MCF 10A (cell line): ENCODE measurements at regions of chr17 and their contacts with region 1.

Region 1: DNA sequence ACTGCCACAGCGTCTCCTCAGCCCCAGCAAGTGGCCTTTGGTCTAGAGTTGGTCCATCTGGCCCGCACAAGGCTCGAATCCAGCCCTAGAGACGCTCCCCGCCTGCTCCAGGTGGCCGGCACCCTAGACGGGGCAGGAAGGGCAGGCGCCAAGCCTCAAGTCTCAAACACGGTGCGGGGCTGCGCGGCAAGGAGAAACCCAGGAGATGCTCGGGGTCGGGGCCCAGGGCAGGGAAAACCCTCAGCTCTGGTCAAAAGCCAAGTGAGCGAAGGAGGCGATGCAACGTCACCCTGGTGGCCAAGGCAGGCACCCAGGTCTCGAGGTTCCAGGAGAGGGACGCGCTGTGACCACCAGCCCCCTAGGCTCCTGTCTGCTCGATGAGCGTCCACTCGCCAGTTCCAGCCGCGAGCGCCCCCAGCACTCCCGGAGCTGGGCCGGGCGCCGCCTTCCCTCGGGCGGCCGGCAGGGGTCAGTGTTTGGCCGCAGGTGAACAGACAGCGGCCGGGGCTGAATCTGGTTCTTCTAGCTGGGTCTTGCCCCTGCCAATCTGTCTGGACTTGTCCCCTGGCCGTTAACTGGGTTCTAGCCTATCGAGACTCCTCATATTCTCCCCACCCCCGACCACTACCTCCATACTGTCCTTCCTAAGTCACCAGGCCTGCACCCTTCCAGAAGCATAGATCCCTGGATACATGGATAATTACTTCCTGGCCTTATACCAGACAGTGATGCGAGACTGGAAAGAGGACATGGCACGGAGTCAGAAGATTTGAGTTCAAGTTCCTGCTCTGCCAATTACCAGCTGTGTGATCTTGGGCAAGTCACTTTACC is 44.0 kb downstream of the PRAC1 start:
- DNase-seq: peak; percentile 72
- H3K4me3 Mint-ChIP-seq: no peak overlapping the region
- H3K27ac Mint-ChIP-seq: no peak overlapping the region
- H3K4me1 Mint-ChIP-seq: peaks cover 4% of the 10 kb centered on the region
- H3K27me3 Mint-ChIP-seq: peaks cover 19% of the 10 kb centered on the region
- CTCF ChIP-seq: peak; percentile 96

Region 2: GRCh38 chr17:48704361-48705248 is 26.2 kb after region 1 on chr17:
- CTCF ChIA-PET with region 1: interaction called, 11 read pairs
- POLR2A ChIA-PET with region 1: no interaction called
- intact Hi-C with region 1: no loop called
- DNase-seq: no peak
- H3K4me3 Mint-ChIP-seq: no peak overlapping the region
- H3K27ac Mint-ChIP-seq: no peak overlapping the region
- H3K4me1 Mint-ChIP-seq: no peaks in the 10 kb centered on the region
- H3K27me3 Mint-ChIP-seq: peaks cover 100% of the 10 kb centered on the region
- CTCF ChIP-seq: no peak

Region 3: GRCh38 chr17:48718761-48719641 is 40.6 kb after region 1 on chr17:
- CTCF ChIA-PET with region 1: interaction called, 26 read pairs
- POLR2A ChIA-PET with region 1: interaction called, 4 read pairs
- intact Hi-C with region 1: no loop called
- DNase-seq: no peak
- H3K4me3 Mint-ChIP-seq: no peak overlapping the region
- H3K27ac Mint-ChIP-seq: no peak overlapping the region
- H3K4me1 Mint-ChIP-seq: no peaks in the 10 kb centered on the region
- H3K27me3 Mint-ChIP-seq: peaks cover 28% of the 10 kb centered on the region
- CTCF ChIP-seq: no peak

Region 4: DNA sequence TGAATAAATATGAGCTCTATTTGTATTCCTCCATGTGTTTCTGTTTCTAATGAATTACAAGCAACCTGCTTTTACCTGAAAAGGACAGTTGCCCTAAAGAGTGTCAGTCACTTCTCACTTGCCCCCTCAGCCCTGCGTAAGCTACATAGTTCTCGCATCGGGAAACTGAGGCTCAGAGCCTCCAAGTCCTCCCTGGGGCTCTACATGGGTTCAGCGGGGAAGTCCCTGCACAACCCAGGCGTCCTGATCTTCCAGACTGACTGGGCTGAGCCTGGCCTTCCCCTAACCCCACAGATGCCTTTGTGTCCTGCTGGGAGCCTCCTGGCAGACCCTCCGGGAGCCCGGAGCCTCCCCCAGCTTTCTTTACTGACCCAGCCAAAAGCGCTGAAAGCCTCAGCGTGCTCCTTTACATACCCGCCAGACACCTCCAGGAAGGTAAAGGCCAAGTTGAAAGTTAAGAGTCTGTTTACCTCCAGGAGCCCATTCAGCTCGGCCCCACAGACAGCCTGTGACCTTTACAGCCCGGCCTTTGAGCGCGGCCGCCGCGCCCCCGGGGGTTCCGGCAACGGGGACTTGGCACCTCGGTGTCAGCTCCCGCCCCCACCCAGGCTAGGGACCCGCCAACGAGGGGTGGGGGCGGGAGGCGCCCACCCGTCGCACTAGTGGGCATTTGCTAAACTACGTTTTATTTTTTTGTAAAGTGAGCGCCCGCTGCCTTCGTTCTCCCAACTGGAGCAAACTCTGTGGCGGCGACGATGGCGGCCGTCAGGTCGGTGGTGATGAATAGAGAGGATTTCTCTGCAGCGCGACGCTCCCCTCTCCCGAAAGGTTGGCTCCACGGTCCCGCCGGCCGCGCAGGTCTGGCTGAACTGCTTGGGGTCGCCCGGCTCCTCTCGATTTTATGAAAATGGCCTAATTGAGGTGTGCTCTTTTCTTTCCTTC is 54.6 kb after region 1 on chr17:
- CTCF ChIA-PET with region 1: no interaction called
- POLR2A ChIA-PET with region 1: no interaction called
- intact Hi-C with region 1: no loop called
- DNase-seq: no peak
- H3K4me3 Mint-ChIP-seq: no peak overlapping the region
- H3K27ac Mint-ChIP-seq: no peak overlapping the region
- H3K4me1 Mint-ChIP-seq: peaks cover 6% of the 10 kb centered on the region
- H3K27me3 Mint-ChIP-seq: peaks cover 100% of the 10 kb centered on the region
- CTCF ChIP-seq: no peak

Region 5: DNA sequence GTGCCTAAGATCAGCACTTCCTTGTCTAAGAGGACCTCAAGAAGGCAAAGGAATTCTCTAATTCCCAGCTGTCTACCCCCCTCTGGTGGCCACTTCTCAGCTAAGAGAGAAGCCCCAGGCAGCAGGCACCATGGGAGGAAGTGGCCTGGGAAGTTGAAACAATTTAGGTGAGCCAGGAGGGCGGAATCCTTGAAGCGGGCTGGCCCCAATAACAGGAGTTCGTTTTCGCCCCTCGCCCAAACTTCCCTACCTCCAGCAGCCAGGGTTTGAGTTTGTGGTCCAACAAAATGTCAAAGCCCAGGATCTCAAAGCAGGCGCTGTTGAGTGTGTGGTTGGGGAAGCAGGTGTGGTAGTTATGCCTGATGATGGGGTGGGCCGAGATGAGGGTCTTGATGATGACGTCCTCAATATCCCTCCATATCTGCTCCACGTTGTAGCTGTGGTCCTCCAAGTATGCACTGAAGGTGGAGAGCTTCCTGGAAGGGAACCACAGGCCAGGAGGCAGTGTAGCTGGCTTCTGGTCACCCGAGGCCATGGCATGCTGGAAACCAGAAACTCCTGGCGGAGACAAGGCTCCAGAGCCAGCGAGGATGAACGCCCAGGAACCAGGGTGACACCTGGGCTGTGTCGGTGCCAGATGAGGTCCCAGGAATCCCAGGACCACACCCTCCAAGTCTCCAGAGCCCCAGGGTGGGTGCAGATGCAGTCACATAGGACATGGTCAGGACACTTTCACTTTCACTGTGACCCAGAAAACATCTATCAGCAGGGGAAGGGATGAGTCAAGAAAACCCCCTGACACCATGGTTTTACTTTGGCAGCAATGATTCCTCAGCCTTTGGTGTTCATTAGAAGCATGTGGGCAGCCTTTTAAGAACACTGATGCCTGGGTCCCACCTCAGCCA is 113.0 kb after region 1 on chr17:
- CTCF ChIA-PET with region 1: interaction called, 75 read pairs
- POLR2A ChIA-PET with region 1: interaction called, 8 read pairs
- intact Hi-C with region 1: loop called (anchors 1 kb)
- DNase-seq: peak; percentile 86
- H3K4me3 Mint-ChIP-seq: no peak overlapping the region
- H3K27ac Mint-ChIP-seq: no peak overlapping the region
- H3K4me1 Mint-ChIP-seq: peaks cover 9% of the 10 kb centered on the region
- H3K27me3 Mint-ChIP-seq: peaks cover 44% of the 10 kb centered on the region
- CTCF ChIP-seq: peak; percentile 68

Region 6: GRCh38 chr17:48871551-48872351 is 193.4 kb after region 1 on chr17:
- CTCF ChIA-PET with region 1: interaction called, 89 read pairs
- POLR2A ChIA-PET with region 1: interaction called, 3 read pairs
- intact Hi-C with region 1: no loop called
- DNase-seq: no peak
- H3K4me3 Mint-ChIP-seq: no peak overlapping the region
- H3K27ac Mint-ChIP-seq: no peak overlapping the region
- H3K4me1 Mint-ChIP-seq: no peaks in the 10 kb centered on the region
- H3K27me3 Mint-ChIP-seq: no peaks in the 10 kb centered on the region
- CTCF ChIP-seq: no peak